MCF 10A (cell line): ENCODE measurements at regions of chr18 and their contacts with region 1.

Region 1: DNA sequence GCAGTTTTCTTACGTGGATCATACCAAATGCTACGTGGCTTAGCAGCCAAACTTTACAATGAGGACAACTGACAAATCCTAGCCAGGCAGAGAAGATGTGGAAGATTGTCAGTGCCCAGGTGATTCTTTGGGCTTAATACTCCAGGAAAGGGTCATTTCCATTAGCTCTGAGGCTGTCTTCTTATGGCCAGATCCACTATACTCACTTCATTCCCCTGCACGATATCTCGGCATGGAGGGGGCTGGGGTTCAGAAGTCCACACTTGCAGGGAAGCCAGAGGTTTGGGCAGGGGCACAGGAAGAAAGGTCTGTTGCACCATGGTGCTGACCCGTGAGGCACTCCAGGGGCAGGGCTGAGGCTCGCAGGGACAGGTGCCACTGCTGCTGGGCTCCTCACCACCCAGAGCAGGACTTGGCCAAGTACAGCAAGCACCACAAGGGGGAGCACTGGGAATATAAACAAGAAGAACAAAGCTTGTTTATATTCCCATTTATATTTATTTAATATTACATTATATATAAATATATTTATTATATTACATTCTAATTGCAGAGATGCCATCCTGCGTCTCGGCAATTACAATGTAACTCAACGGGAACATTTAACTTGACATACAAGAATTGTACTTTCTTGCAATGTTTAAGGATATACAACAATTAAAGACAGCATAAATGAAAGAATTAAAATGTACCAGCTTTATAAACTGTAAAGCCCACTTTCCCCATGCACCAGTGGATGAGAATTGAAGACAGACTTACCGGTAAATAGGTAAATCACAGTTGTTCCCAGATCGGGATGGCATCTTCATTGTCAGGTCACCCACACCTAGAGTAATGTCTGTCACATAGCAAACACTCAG is 27.2 kb downstream of the CLUL1 start:
- DNase-seq: peak; percentile 69
- H3K4me3 Mint-ChIP-seq: no peak overlapping the region
- H3K27ac Mint-ChIP-seq: no peak overlapping the region
- H3K4me1 Mint-ChIP-seq: peaks cover 8% of the 10 kb centered on the region
- H3K27me3 Mint-ChIP-seq: peaks cover 24% of the 10 kb centered on the region
- CTCF ChIP-seq: peak; percentile 62

Region 2: GRCh38 chr18:475202-476031 is 148.6 kb before region 1 on chr18:
- CTCF ChIA-PET with region 1: no interaction called
- POLR2A ChIA-PET with region 1: no interaction called
- intact Hi-C with region 1: no loop called
- DNase-seq: peak; percentile 47
- H3K4me3 Mint-ChIP-seq: no peak overlapping the region
- H3K27ac Mint-ChIP-seq: no peak overlapping the region
- H3K4me1 Mint-ChIP-seq: no peaks in the 10 kb centered on the region
- H3K27me3 Mint-ChIP-seq: no peaks in the 10 kb centered on the region
- CTCF ChIP-seq: no peak

Region 3: DNA sequence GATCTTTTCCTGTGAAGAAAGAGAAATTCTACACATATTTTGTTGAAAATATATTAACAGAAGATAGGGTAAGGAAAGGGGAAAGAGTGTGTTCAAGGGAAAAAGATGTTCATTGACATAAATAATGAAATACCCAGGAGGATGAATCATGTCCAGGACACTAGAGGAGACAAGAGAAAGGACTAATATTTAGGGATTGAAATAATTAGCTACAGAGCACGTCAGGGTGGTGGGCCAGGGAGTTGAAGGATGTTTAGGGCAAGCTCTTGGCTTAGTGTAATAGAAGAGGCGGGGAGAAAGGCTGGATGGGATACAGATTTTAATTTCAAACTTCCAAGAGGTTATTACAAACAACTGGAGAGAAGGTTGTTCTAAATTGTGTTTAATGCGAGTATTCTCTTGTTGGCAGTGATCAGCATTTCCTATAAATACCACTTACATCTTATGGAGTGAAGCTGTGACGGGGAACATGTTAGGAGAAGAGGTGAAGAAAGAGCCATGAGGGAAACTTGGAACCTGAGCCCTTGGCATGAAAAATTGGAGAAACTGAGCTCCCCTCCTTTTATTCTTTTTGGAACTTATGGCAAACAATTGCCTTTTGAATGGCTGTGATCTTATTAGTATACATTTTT is 80.4 kb before region 1 on chr18:
- CTCF ChIA-PET with region 1: no interaction called
- POLR2A ChIA-PET with region 1: no interaction called
- intact Hi-C with region 1: no loop called
- DNase-seq: no peak
- H3K4me3 Mint-ChIP-seq: no peak overlapping the region
- H3K27ac Mint-ChIP-seq: no peak overlapping the region
- H3K4me1 Mint-ChIP-seq: no peaks in the 10 kb centered on the region
- H3K27me3 Mint-ChIP-seq: no peaks in the 10 kb centered on the region
- CTCF ChIP-seq: no peak

Region 4: GRCh38 chr18:644395-645004 is 20.5 kb after region 1 on chr18:
- CTCF ChIA-PET with region 1: interaction called, 13 read pairs
- POLR2A ChIA-PET with region 1: no interaction called
- intact Hi-C with region 1: no loop called
- DNase-seq: no peak
- H3K4me3 Mint-ChIP-seq: no peak overlapping the region
- H3K27ac Mint-ChIP-seq: no peak overlapping the region
- H3K4me1 Mint-ChIP-seq: no peaks in the 10 kb centered on the region
- H3K27me3 Mint-ChIP-seq: no peaks in the 10 kb centered on the region
- CTCF ChIP-seq: no peak

Region 5: DNA sequence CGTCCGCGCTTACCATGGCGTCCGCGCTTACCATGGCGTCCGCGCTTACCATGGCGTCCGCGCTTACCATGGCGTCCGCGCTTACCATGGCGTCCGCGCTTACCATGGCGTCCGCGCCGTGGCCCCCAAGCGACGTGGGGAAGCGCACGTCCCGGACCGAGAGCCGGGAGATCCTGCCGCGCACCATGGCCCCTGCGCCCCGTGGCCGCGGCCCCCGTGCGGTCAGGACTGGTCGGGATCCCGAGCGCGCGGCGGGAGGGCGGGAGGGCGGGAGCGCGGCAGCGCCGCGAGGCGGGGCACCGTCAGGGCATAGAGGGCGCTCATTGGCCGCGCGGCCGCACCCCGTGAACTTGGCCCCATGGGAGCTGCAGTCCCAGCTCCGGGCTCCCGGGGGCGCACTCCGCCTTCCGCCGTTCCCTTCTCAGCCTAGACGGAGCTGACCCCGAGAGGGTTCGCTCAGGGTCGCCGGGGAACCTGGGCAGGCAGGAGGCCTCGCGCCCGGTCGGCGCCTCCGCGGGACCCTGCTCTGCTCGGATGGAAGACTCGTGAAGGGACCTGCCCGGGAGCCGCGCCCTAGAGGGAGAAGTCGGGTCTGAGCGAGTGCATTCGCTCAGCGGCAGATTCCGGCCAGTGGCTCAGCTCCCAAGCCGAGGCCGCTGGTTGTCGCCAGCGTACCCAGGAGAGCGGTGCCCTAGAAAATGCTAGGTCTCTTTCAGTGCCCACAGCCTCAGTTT is 88.6 kb after region 1 on chr18 and contains the start of gene ENOSF1:
- CTCF ChIA-PET with region 1: interaction called, 10 read pairs
- POLR2A ChIA-PET with region 1: no interaction called
- intact Hi-C with region 1: loop called (anchors 1 kb)
- DNase-seq: peak; percentile 86
- H3K4me3 Mint-ChIP-seq: peak within 1 kb of the TSS; percentile 88
- H3K27ac Mint-ChIP-seq: peak within 1 kb of the TSS; percentile 96
- H3K4me1 Mint-ChIP-seq: peaks cover 11% of the 10 kb centered on the region
- H3K27me3 Mint-ChIP-seq: no peaks in the 10 kb centered on the region
- CTCF ChIP-seq: peak; percentile 97
- total RNA-seq, gene ENOSF1: 106 and 111 TPM in 2 replicates

Region 6: GRCh38 chr18:731185-731584 is 107.2 kb after region 1 on chr18:
- CTCF ChIA-PET with region 1: interaction called, 10 read pairs
- POLR2A ChIA-PET with region 1: interaction called, 3 read pairs
- intact Hi-C with region 1: no loop called
- DNase-seq: no peak
- H3K4me3 Mint-ChIP-seq: no peak overlapping the region
- H3K27ac Mint-ChIP-seq: no peak overlapping the region
- H3K4me1 Mint-ChIP-seq: peaks cover 8% of the 10 kb centered on the region
- H3K27me3 Mint-ChIP-seq: no peaks in the 10 kb centered on the region
- CTCF ChIP-seq: no peak

Region 7: GRCh38 chr18:741931-742512 is 118.0 kb after region 1 on chr18:
- CTCF ChIA-PET with region 1: interaction called, 25 read pairs
- POLR2A ChIA-PET with region 1: no interaction called
- intact Hi-C with region 1: loop called (anchors 5 kb)
- DNase-seq: peak; percentile 45
- H3K4me3 Mint-ChIP-seq: no peak overlapping the region
- H3K27ac Mint-ChIP-seq: no peak overlapping the region
- H3K4me1 Mint-ChIP-seq: peaks cover 6% of the 10 kb centered on the region
- H3K27me3 Mint-ChIP-seq: no peaks in the 10 kb centered on the region
- CTCF ChIP-seq: peak; percentile 72